MCF 10A (cell line): ENCODE measurements at regions of chr22 and their contacts with region 1.

Region 1: GRCh38 chr22:37887610-37888378 is 18.3 kb upstream of the MICALL1 start:
- DNase-seq: peak; percentile 94
- H3K4me3 Mint-ChIP-seq: no peak overlapping the region
- H3K27ac Mint-ChIP-seq: peak overlapping the region; percentile 84
- H3K4me1 Mint-ChIP-seq: peaks cover 16% of the 10 kb centered on the region
- H3K27me3 Mint-ChIP-seq: no peaks in the 10 kb centered on the region
- CTCF ChIP-seq: peak; percentile 56

Region 2: DNA sequence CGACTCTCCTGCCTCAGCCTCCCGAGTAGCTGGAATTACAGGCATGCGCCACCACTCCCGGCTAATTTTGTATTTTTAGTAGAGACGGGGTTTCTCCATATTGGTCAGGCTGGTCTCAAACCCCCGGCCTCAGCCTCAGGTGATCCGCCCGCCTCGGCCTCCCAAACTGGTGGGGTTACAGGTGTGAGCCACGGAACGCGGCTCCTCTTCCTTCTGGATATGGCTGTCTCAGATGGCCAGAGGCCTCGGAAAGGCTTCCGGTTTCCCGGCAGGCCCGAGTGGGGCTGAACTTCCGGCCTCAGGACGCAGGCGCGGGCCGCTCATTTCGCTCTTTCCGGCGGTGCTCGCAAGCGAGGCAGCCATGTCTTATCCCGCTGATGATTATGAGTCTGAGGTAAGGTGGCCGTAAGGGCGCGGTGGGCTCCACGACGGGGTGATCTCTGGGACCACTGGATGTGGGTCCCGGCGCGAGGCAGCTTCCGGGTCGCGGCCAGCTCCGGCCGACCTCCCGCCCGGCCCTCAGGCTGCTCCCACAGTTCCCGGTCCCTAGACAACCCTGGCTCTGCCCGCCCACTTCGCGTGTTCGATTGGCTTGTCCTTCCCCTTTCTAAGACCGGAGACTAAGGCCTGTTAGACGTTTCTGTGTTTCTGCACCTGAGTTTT is 38.6 kb before region 1 on chr22 and contains the start of gene EIF3L:
- CTCF ChIA-PET with region 1: interaction called, 9 read pairs
- POLR2A ChIA-PET with region 1: interaction called, 11 read pairs
- intact Hi-C with region 1: no loop called
- DNase-seq: peak; percentile 89
- H3K4me3 Mint-ChIP-seq: peak within 1 kb of the TSS; percentile 96
- H3K27ac Mint-ChIP-seq: peak within 1 kb of the TSS; percentile 99
- H3K4me1 Mint-ChIP-seq: peaks cover 24% of the 10 kb centered on the region
- H3K27me3 Mint-ChIP-seq: no peaks in the 10 kb centered on the region
- CTCF ChIP-seq: no peak
- total RNA-seq, gene EIF3L: 395 and 505 TPM in 2 replicates

Region 3: GRCh38 chr22:37905534-37906363 is 18.0 kb after region 1 on chr22 and contains the start of gene MICALL1:
- CTCF ChIA-PET with region 1: interaction called, 24 read pairs
- POLR2A ChIA-PET with region 1: interaction called, 189 read pairs
- intact Hi-C with region 1: loop called (anchors 1 kb)
- DNase-seq: peak; percentile 77
- H3K4me3 Mint-ChIP-seq: peak within 1 kb of the TSS; percentile 78
- H3K27ac Mint-ChIP-seq: peak within 1 kb of the TSS; percentile 84
- H3K4me1 Mint-ChIP-seq: peaks cover 37% of the 10 kb centered on the region
- H3K27me3 Mint-ChIP-seq: no peaks in the 10 kb centered on the region
- CTCF ChIP-seq: no peak
- total RNA-seq, gene MICALL1: 164 and 165 TPM in 2 replicates

Region 4: GRCh38 chr22:37933711-37934376 is 46.0 kb after region 1 on chr22:
- CTCF ChIA-PET with region 1: interaction called, 20 read pairs
- POLR2A ChIA-PET with region 1: interaction called, 6 read pairs
- intact Hi-C with region 1: loop called (anchors 1 kb)
- DNase-seq: peak; percentile 95
- H3K4me3 Mint-ChIP-seq: peak overlapping the region; percentile 16
- H3K27ac Mint-ChIP-seq: no peak overlapping the region
- H3K4me1 Mint-ChIP-seq: peaks cover 17% of the 10 kb centered on the region
- H3K27me3 Mint-ChIP-seq: no peaks in the 10 kb centered on the region
- CTCF ChIP-seq: peak; percentile 90

Region 5: GRCh38 chr22:38316364-38317121 is 428.7 kb after region 1 on chr22:
- CTCF ChIA-PET with region 1: no interaction called
- POLR2A ChIA-PET with region 1: no interaction called
- intact Hi-C with region 1: no loop called
- DNase-seq: peak; percentile 50
- H3K4me3 Mint-ChIP-seq: peak overlapping the region; percentile 93
- H3K27ac Mint-ChIP-seq: peak overlapping the region; percentile 93
- H3K4me1 Mint-ChIP-seq: peaks cover 46% of the 10 kb centered on the region
- H3K27me3 Mint-ChIP-seq: no peaks in the 10 kb centered on the region
- CTCF ChIP-seq: no peak